Mucosa of descending colon (tissue), 3 donors: ENCODE measurements at regions of chr3 and their contacts with region 1.

Region 1: DNA sequence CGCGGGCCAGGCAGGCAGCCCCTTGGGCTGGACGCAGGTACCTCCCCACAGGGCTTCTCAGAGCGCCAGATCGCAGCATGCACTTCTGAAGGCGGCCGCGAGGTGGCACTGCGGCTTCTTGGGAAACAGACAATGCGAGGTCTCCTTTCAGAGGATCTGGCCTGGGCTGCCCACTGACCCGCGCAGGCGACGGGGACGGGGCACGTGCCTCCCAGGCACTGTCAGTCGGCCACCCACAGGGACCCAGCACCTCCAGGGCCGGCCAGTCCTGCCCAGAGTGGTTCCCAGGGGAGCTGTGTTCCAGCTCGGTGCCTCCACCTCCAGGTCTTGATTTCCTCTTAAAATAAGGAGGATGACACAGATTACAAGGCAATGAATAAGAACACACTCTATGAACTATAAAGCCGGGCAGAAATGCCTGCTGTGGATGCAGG is 24.4 kb upstream of the TXNRD3 start:
- DNase-seq: peak; percentile 76 to 92 (median 88)
- ATAC-seq: peak; percentile 91
- H3K4me3 ChIP-seq: no peak overlapping the region
- H3K4me1 ChIP-seq: no peaks in the 10 kb centered on the region
- CTCF ChIP-seq: peak; percentile 95

Region 2: DNA sequence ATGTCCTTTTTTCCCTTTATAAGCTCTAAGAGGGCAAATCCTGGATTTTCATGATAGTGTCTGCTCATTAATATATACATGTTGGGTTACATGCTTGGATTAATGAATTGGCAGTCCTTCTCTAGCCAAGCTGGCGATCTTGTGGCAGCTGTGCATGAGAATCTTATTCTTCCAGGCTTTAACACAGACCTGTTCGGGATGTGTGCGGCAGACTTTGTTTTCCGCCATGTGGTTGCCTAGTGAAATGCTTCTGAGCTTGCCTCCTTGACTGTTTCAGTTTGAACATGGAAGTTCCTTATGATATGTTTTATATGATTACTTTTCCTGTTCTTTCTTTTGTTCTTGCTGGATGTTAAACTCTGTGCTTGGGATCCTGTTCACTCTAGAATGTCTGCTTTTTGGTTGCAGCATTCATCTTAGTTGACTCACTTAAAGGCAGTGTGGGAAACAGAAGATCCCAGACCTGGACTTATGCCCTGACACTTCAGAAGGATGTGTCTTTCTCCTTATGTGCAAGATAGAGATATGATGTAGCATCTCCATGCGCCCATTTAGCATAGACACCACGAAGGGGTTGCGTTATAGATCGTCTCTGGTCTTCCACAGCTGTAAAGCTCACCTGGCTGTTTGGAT is 31.9 kb after region 1 on chr3:
- intact Hi-C with region 1: no loop called
- DNase-seq: no peak
- ATAC-seq: no peak
- H3K4me3 ChIP-seq: no peak overlapping the region
- H3K4me1 ChIP-seq: no peaks in the 10 kb centered on the region
- CTCF ChIP-seq: no peak

Region 3: DNA sequence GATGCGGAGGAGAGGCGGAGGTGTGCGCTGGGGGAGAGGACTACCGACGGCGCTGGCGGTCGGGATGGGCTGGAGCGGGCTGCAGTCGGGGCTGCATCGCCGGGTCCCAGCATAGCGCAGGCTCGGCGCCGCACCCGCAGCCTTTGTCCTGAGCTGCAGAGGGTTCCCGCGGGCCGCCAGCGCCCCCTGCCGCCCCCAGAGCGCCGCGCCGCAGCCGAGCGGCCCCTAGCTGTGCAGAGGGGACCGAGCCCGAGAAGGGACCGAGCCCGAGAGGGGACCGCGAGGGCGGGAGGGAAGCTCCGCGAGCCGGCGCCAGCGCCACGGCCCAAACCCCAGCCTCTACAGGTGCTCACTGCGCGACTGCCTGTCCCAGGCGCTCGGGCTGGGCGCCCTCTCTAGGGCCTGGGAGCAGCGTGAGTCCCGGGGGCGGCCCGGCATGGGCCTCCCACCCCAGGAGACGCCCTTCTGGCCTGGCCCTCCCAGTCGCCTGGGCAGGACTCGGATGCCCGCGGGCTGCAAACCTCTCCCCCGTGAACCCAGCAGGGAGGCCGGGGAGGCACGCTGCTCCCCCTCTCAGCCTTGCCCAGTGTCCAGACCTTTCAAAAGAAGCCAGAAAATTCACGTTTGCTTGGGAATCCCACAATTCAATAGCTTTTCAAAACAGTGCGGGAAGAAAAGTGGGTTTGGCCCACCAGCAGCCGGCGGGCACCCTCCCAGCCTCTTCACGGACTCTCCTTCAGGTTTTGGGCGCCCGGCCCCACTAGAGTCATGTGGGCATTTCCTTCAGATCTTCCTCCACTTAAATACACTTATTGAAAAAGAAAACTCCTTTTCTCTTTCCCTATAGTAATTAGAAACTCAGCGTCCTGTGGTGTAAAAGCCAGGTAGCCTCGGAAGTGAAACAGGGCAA is 776.5 kb after region 1 on chr3:
- intact Hi-C with region 1: loop called (anchors 5 kb)
- DNase-seq: peak; percentile 63 to 83 (median 78)
- ATAC-seq: peak; percentile 90
- H3K4me3 ChIP-seq: no peak overlapping the region
- H3K4me1 ChIP-seq: peaks cover 16% of the 10 kb centered on the region
- CTCF ChIP-seq: peak; percentile 87

Region 4: GRCh38 chr3:127544192-127544802 is 865.0 kb after region 1 on chr3:
- intact Hi-C with region 1: loop called in 1 of 2 experiments (anchors 5 kb)
- DNase-seq: peak; percentile 70 to 92 (median 84)
- ATAC-seq: peak; percentile 69
- H3K4me3 ChIP-seq: no peak overlapping the region
- H3K4me1 ChIP-seq: peaks cover 21% of the 10 kb centered on the region
- CTCF ChIP-seq: peak; percentile 75

Region 5: GRCh38 chr3:127549820-127550460 is 870.6 kb after region 1 on chr3:
- intact Hi-C with region 1: loop called in 1 of 2 experiments (anchors 5 kb)
- DNase-seq: no peak
- ATAC-seq: no peak
- H3K4me3 ChIP-seq: no peak overlapping the region
- H3K4me1 ChIP-seq: peaks cover 7% of the 10 kb centered on the region
- CTCF ChIP-seq: no peak